ENCODE measurements at regions of chr11 and their contacts with region 1.

Region 1: DNA sequence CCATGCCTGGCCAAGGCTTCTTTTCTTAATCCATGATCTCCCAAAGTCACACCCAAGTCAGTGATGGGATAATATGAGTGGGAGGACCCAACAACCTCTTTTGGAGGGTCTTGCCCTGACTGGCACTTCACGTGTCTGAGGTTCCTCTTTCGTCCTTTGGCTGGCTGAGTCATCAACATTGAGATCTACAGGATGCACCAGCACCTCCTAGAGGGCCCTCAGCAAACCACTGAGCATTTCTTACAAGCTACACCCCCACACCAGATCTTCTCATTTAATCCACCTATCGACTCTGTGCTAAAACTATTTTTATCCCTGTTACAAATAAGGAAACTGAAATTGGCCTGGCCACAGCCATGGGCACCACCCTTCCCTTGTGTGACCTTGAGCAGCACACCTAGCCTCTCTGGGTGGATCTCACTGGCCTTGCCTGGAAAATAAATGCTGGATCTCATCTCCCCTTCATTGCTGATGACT is 63.4 kb downstream of the FLI1 start:
- DNase-seq: peak; percentile 53
- H3K4me3 Mint-ChIP-seq: peak overlapping the region; percentile 45
- H3K27ac Mint-ChIP-seq: peak overlapping the region; percentile 90
- H3K4me1 Mint-ChIP-seq: peaks cover 55% of the 10 kb centered on the region
- H3K27me3 Mint-ChIP-seq: no peaks in the 10 kb centered on the region

Region 2: GRCh38 chr11:128157423-128158298 is 599.6 kb before region 1 on chr11:
- intact Hi-C with region 1: loop called (anchors 5 kb)
- DNase-seq: peak; percentile 39
- H3K4me3 Mint-ChIP-seq: no peak overlapping the region
- H3K27ac Mint-ChIP-seq: peak overlapping the region; percentile 81
- H3K4me1 Mint-ChIP-seq: peaks cover 26% of the 10 kb centered on the region
- H3K27me3 Mint-ChIP-seq: no peaks in the 10 kb centered on the region

Region 3: GRCh38 chr11:128323381-128323780 is 433.9 kb before region 1 on chr11:
- intact Hi-C with region 1: loop called (anchors 10 kb)
- DNase-seq: peak; percentile 44
- H3K4me3 Mint-ChIP-seq: peak overlapping the region; percentile 62
- H3K27ac Mint-ChIP-seq: peak overlapping the region; percentile 94
- H3K4me1 Mint-ChIP-seq: peaks cover 81% of the 10 kb centered on the region
- H3K27me3 Mint-ChIP-seq: no peaks in the 10 kb centered on the region

Region 4: DNA sequence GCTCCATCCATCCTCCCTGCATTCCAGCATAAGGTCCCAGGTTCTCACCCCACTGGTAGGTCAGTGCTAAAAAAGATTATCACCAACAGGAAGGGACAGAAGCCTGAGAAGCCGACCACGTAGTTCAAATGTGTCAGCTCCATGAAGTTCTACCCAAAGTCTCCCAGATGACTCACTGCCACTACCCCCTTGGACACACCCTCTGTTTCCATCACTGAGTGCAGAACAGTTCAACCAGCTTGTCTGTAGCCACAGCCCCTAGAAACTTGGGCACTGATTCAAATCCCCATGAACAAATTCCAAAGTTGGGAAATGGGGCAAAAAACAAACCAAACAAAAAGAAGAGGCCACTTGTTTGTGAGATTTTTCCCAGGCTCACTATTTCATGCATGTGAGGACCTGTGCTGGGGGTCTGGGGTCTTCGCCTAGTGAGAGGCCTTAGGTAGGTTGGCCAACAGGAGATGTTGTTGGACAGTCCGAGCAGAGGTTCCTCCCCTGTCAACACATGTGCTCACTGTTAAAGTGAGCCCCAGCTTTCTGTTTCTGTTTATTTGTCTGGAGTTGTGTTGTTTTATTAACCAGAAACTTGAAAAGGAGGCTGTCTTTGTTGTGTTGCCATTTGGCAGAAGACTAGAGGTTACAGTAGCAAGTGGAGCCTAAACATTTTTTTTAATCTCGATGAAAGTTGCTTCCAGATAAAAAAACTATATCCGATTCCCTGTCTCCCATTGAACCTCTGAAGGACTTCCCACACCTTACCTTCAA is 87.6 kb before region 1 on chr11:
- intact Hi-C with region 1: no loop called
- DNase-seq: no peak
- H3K4me3 Mint-ChIP-seq: no peak overlapping the region
- H3K27ac Mint-ChIP-seq: no peak overlapping the region
- H3K4me1 Mint-ChIP-seq: peaks cover 14% of the 10 kb centered on the region
- H3K27me3 Mint-ChIP-seq: peaks cover 34% of the 10 kb centered on the region

Region 5: DNA sequence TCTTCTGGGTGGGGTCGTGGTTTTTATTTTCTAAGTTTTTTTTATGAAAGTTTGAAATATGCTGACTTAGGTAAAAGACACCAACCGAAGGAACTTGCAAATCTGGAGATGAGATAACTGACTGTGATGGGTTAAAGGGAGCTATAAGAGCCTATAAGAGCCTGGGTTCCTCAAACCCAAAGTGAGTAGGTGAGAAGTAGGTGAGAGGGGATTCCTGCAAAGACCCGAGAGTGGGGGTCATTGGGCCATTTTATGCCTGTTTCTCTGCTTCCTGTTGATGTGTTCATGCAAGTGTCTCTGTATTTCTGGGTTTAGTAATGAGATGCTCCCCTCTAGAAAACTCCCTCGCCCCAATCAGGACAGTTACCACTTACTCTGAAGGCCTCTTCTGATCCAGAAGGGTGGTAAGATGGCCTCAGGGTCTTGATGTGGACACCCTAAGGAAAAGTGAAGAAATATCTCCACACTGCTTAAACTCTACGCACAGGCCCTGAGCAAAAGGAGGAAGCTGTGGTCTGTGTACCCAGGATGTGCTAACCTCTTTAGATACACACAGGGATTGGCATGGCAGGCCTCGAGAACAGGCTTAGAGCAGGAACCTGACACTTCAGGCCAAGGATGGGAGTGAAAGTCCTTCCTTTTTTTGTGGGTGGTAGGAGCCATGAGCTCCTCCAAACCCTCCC is 61.6 kb before region 1 on chr11:
- intact Hi-C with region 1: loop called (anchors 1 kb)
- DNase-seq: no peak
- H3K4me3 Mint-ChIP-seq: peak overlapping the region; percentile 80
- H3K27ac Mint-ChIP-seq: peak overlapping the region; percentile 87
- H3K4me1 Mint-ChIP-seq: peaks cover 63% of the 10 kb centered on the region
- H3K27me3 Mint-ChIP-seq: peaks cover 15% of the 10 kb centered on the region

Region 6: GRCh38 chr11:128733440-128734102 is 23.7 kb before region 1 on chr11:
- intact Hi-C with region 1: loop called (anchors 1 kb)
- DNase-seq: no peak
- H3K4me3 Mint-ChIP-seq: peak overlapping the region; percentile 72
- H3K27ac Mint-ChIP-seq: peak overlapping the region; percentile 90
- H3K4me1 Mint-ChIP-seq: peaks cover 87% of the 10 kb centered on the region
- H3K27me3 Mint-ChIP-seq: no peaks in the 10 kb centered on the region

Region 7: GRCh38 chr11:128965485-128965884 is 208.2 kb after region 1 on chr11:
- intact Hi-C with region 1: no loop called
- DNase-seq: no peak
- H3K4me3 Mint-ChIP-seq: peak overlapping the region; percentile 9
- H3K27ac Mint-ChIP-seq: no peak overlapping the region
- H3K4me1 Mint-ChIP-seq: peaks cover 55% of the 10 kb centered on the region
- H3K27me3 Mint-ChIP-seq: peaks cover 1% of the 10 kb centered on the region